Natural killer cell (primary cell): ENCODE measurements at regions of chr7 and their contacts with region 1.

Region 1: GRCh38 chr7:50418086-50418515 is 32.0 kb downstream of the FIGNL1 start:
- DNase-seq: peak; percentile 46 to 86
- ATAC-seq: peak; percentile 80 to 99 (median 96)
- H3K4me3 ChIP-seq: no peak overlapping the region
- H3K4me3 Mint-ChIP-seq: no peak overlapping the region
- H3K27ac ChIP-seq: no peak overlapping the region
- H3K27ac Mint-ChIP-seq: no peak overlapping the region
- H3K4me1 ChIP-seq: peaks cover 24% of the 10 kb centered on the region
- H3K4me1 Mint-ChIP-seq: peaks cover 6 to 7% of the 10 kb centered on the region in 2 donors
- H3K27me3 ChIP-seq: no peaks in the 10 kb centered on the region
- H3K27me3 Mint-ChIP-seq: no peaks in the 10 kb centered on the region
- CTCF ChIP-seq: peak; percentile 78

Region 2: GRCh38 chr7:50142425-50143017 is 275.6 kb before region 1 on chr7:
- intact Hi-C with region 1: loop called (anchors 1 kb)
- DNase-seq: peak in 1 of 2 donors; percentile 84
- ATAC-seq: peak; percentile 67 to 73 (median 70)
- H3K4me3 ChIP-seq: no peak overlapping the region
- H3K4me3 Mint-ChIP-seq: no peak overlapping the region
- H3K27ac ChIP-seq: no peak overlapping the region
- H3K27ac Mint-ChIP-seq: no peak overlapping the region
- H3K4me1 ChIP-seq: peaks cover 3% of the 10 kb centered on the region
- H3K4me1 Mint-ChIP-seq: peaks cover 4% of the 10 kb centered on the region in 2 donors
- H3K27me3 ChIP-seq: no peaks in the 10 kb centered on the region
- H3K27me3 Mint-ChIP-seq: peaks cover 8 to 14% of the 10 kb centered on the region in 2 donors
- CTCF ChIP-seq: peak; percentile 87

Region 3: GRCh38 chr7:50206453-50207250 is 211.4 kb before region 1 on chr7:
- intact Hi-C with region 1: loop called (anchors 1 kb)
- DNase-seq: peak in 1 of 2 donors; percentile 79
- ATAC-seq: peak; percentile 45 to 68 (median 48)
- H3K4me3 ChIP-seq: no peak overlapping the region
- H3K4me3 Mint-ChIP-seq: peak overlapping the region; percentile 56
- H3K27ac ChIP-seq: peak overlapping the region; percentile 14
- H3K27ac Mint-ChIP-seq: peak overlapping the region; percentile 35 to 83
- H3K4me1 ChIP-seq: peaks cover 45% of the 10 kb centered on the region
- H3K4me1 Mint-ChIP-seq: peaks cover 37 to 45% of the 10 kb centered on the region in 2 donors
- H3K27me3 ChIP-seq: no peaks in the 10 kb centered on the region
- H3K27me3 Mint-ChIP-seq: no peaks in the 10 kb centered on the region
- CTCF ChIP-seq: no peak